ENCODE measurements at regions of chr7 and their contacts with region 1.

Region 1: DNA sequence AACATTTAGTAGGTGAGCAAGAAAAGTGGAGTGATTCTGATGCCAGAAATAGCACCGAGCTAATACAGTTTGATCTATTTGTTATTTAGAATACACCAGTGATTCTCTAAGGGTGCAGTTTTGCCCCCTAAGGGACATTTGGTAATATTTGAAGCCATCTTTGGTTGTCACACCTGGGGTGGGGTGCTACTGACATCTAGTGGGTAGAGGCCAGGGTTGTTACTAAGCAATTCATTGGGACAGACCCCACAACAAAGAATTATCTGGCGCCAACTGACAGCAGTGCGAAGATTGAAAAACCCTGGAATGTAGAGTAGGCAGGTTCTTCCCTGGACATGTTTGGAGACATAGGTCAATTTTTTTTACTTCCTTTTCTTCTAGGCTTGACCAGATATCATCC is 14.6 kb downstream of the PALS2 start:
- DNase-seq: peak in 8 of 9 donors; percentile 21 to 70 (median 63)
- ATAC-seq: peak; percentile 88
- H3K4me3 ChIP-seq: no peak overlapping the region
- H3K4me3 Mint-ChIP-seq: no peak overlapping the region
- H3K27ac ChIP-seq: no peak overlapping the region
- H3K27ac Mint-ChIP-seq: peak overlapping the region in 2 of 9 donors; percentile 0 to 26
- H3K4me1 ChIP-seq: no peaks in the 10 kb centered on the region
- H3K4me1 Mint-ChIP-seq: peaks cover 7 to 40% (median 27%) of the 10 kb centered on the region in 7 donors
- H3K27me3 ChIP-seq: no peaks in the 10 kb centered on the region
- H3K27me3 Mint-ChIP-seq: no peaks in the 10 kb centered on the region

Region 2: DNA sequence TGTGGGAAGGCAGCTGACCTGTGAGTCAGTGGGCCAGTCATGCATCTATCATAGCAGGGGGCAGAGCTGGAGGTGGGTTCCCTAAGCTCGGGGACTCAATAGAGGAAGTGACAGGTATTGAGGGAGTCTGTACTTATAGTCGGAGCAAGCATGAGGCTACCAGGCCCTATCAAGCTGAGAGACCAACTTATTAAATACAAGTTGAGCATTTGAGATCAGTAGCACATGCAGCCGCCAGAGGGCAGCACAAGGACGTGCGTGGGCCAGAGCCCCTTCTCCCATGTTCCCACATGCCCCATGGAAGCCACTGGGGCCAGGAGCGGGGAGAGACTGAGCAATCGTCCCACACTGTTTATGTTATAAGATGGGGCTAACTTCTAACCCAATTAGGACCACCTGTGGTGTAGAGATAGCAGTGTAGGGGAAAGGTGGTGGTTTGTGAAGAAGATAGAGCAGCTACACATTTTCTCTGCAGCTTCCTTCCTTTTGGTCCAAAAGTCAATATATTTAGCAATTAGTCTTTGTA is 890.9 kb before region 1 on chr7:
- CTCF ChIA-PET with region 1: no interaction called
- POLR2A ChIA-PET with region 1: no interaction called
- intact Hi-C with region 1: loop called in 1 of 2 experiments (anchors 5 kb)
- DNase-seq: peak; percentile 4 to 49 (median 37)
- ATAC-seq: peak; percentile 82
- H3K4me3 ChIP-seq: no peak overlapping the region
- H3K4me3 Mint-ChIP-seq: no peak overlapping the region
- H3K27ac ChIP-seq: no peak overlapping the region
- H3K27ac Mint-ChIP-seq: no peak overlapping the region
- H3K4me1 ChIP-seq: no peaks in the 10 kb centered on the region
- H3K4me1 Mint-ChIP-seq: peaks cover 0 to 1% (median 0%) of the 10 kb centered on the region in 7 donors
- H3K27me3 ChIP-seq: no peaks in the 10 kb centered on the region
- H3K27me3 Mint-ChIP-seq: no peaks in the 10 kb centered on the region

Region 3: DNA sequence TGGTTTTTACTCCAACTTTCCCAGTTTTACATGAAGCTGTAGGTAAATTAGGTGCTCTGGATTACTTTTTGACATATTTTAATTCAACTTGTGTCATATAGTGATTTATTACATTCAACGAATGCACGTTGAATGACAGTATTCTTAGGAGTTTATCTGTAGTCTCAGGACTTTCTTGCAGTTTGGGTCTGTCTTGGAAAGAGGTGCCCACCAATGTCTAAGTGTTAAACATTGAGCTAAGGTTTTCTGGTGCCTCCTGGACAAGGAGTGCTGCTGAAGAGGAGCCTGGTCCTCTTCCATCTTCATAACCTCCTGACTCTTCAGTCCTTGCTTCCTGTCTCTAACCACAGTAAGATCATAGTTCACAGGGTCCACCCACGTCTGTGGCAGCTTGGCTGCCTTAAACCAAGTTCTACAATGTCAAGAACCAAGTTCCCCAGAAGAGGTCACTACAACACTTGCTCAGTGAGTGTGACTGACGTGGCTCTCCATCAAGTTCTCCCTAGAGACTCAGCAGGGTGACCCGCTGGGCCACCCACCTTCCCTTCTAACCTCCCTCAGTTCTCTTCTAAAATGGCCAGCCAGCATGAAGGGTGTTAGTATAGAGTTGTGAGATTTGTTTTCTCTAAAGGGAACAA is 297.7 kb before region 1 on chr7:
- CTCF ChIA-PET with region 1: no interaction called
- POLR2A ChIA-PET with region 1: no interaction called
- intact Hi-C with region 1: loop called (anchors 1 to 5 kb)
- DNase-seq: peak in 8 of 9 donors; percentile 17 to 51 (median 40)
- ATAC-seq: peak; percentile 83
- H3K4me3 ChIP-seq: no peak overlapping the region
- H3K4me3 Mint-ChIP-seq: no peak overlapping the region
- H3K27ac ChIP-seq: no peak overlapping the region
- H3K27ac Mint-ChIP-seq: no peak overlapping the region
- H3K4me1 ChIP-seq: peaks cover 0 to 5% of the 10 kb centered on the region in 2 donors
- H3K4me1 Mint-ChIP-seq: peaks cover 6 to 19% (median 12%) of the 10 kb centered on the region in 7 donors
- H3K27me3 ChIP-seq: peaks cover 0 to 16% of the 10 kb centered on the region in 2 donors
- H3K27me3 Mint-ChIP-seq: peaks cover 48 to 56% (median 50%) of the 10 kb centered on the region in 5 donors

Region 4: DNA sequence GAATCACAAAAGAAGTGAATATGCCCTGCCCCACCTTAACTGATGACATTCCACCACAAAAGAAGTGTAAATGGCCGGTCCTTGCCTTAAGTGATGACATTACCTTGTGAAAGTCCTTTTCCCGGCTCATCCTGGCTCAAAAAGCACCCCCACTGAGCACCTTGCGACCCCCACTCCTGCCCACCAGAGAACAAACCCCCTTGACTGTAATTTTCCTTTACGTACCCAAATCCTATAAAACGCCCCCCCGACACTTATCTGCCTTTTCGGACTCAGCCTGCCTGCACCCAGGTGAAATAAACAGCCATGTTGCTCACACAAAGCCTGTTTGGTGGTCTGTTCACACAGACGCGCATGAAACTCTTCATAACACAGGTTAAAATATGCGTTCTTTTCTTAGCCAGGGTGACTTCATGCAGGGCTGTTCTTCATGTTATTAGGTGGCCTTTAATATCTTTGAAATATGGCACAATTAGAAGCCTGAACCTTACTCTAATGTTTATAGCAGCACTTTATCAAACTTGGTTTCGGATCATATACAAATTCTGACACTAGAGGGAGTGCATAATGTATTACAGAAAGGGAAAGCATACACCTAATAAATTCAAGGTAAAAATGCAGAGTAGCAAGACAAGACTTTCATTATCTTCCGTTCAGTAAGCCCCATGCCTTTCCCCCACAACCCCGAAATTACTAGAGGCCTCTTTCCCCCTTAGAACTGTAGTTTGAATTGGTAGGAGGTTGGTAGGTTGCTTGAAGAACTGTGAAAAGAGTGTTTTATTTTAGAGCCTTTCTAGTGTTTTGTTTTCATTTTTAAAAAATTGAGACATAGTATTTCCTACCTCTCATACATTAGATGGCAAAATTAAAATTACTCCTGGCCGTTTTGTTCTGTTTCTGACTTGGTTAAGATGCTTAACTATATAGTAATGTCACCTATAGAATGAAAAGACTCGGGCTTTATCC is 185.9 kb before region 1 on chr7:
- CTCF ChIA-PET with region 1: interaction called, 5 read pairs
- POLR2A ChIA-PET with region 1: interaction called, 3 read pairs
- intact Hi-C with region 1: loop called (anchors 1 kb)
- DNase-seq: peak in 5 of 9 donors; percentile 20 to 35 (median 27)
- ATAC-seq: no peak
- H3K4me3 ChIP-seq: no peak overlapping the region
- H3K4me3 Mint-ChIP-seq: peak overlapping the region in 2 of 10 donors; percentile 25 to 41
- H3K27ac ChIP-seq: no peak overlapping the region
- H3K27ac Mint-ChIP-seq: no peak overlapping the region
- H3K4me1 ChIP-seq: peaks cover 0 to 3% of the 10 kb centered on the region in 2 donors
- H3K4me1 Mint-ChIP-seq: peaks cover 0 to 12% (median 10%) of the 10 kb centered on the region in 7 donors
- H3K27me3 ChIP-seq: no peaks in the 10 kb centered on the region
- H3K27me3 Mint-ChIP-seq: peaks cover 0 to 11% (median 0%) of the 10 kb centered on the region in 5 donors

Region 5: GRCh38 chr7:24475166-24475961 is 112.5 kb before region 1 on chr7:
- CTCF ChIA-PET with region 1: no interaction called
- POLR2A ChIA-PET with region 1: no interaction called
- intact Hi-C with region 1: no loop called
- DNase-seq: no peak
- ATAC-seq: no peak
- H3K4me3 ChIP-seq: no peak overlapping the region
- H3K4me3 Mint-ChIP-seq: no peak overlapping the region
- H3K27ac ChIP-seq: no peak overlapping the region
- H3K27ac Mint-ChIP-seq: no peak overlapping the region
- H3K4me1 ChIP-seq: no peaks in the 10 kb centered on the region
- H3K4me1 Mint-ChIP-seq: no peaks in the 10 kb centered on the region
- H3K27me3 ChIP-seq: no peaks in the 10 kb centered on the region
- H3K27me3 Mint-ChIP-seq: peaks cover 0 to 15% (median 8%) of the 10 kb centered on the region in 5 donors

Region 6: DNA sequence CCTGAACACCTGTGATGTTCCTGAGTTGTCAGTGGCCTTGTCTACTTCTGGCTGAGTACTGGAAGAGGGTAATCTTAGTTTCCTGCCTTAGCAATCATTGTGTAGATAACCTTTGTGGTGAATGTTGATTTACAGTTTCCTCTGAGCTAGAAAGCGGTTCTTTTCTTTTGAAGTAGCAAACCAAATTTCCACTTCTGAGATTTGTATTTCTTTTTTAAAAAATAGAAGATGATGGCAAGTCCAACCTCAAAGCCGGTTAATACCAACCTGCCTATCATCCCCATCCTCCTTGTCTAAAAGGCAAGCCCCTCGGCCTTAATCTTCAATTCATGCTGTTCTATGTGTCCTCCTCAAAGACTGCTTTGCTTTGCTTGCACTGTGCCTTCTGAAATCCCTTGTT is 27.1 kb before region 1 on chr7:
- CTCF ChIA-PET with region 1: no interaction called
- POLR2A ChIA-PET with region 1: no interaction called
- intact Hi-C with region 1: no loop called
- DNase-seq: peak in 7 of 9 donors; percentile 21 to 67 (median 55)
- ATAC-seq: peak; percentile 85
- H3K4me3 ChIP-seq: no peak overlapping the region
- H3K4me3 Mint-ChIP-seq: peak overlapping the region in 9 of 10 donors; percentile 23 to 74 (median 46)
- H3K27ac ChIP-seq: no peak overlapping the region
- H3K27ac Mint-ChIP-seq: peak overlapping the region; percentile 1 to 77 (median 43)
- H3K4me1 ChIP-seq: peaks cover 0 to 16% of the 10 kb centered on the region in 2 donors
- H3K4me1 Mint-ChIP-seq: peaks cover 10 to 25% (median 22%) of the 10 kb centered on the region in 7 donors
- H3K27me3 ChIP-seq: no peaks in the 10 kb centered on the region
- H3K27me3 Mint-ChIP-seq: peaks cover 0 to 16% (median 0%) of the 10 kb centered on the region in 5 donors